AG04449 (cell line): ENCODE measurements at regions of chr11 and their contacts with region 1.

Region 1: DNA sequence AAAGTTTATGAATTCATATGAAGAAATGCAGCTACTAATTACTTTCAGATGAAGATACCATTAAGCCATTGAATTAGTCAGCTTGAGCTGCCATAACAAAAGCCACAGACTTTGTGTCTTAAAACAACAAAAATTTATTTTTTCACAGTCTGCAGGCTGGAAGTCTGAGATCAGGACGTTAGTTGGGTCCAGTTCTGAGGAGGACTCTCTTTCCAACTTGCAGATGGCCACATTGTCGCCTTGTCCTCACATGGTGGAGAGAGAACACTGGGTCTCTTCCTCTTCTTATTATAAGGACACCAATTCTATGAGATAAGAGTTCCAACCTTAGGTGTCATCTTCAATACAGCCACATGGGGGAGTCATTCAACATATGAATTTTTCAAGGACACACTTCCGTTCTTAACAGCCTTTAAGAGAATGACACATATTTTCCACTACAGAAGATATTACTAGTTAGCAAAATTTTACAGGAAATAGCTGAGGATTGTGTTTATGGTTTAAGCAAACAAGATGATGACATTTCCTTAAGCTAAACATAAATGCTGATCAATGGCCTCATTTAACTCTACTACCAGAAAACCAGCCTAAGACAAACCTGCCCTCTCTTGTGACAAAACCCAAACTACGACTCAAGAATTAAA is 56.0 kb downstream of the DCUN1D5 start:
- DNase-seq: peak; percentile 67
- H3K4me3 ChIP-seq: no peak overlapping the region
- CTCF ChIP-seq: peak; percentile 49

Region 2: DNA sequence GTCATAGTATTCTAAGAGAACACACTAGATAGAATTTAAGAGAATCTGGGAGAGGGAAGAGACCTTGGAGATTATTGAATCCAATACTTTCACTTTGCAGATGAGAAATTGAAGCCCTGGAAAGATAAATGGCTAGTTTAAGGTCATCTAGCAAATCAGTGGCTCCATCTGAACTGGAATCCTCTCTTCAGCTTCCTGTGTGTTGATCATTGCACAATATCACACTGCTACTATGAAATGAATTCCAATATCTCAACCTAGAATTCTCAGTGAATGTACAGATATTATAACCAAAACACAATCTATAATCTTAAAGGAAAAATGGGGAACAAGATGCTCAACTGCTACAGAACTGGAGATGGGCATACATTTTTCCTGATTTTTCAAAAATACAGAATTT is 11.9 kb after region 1 on chr11:
- CTCF ChIA-PET with region 1: interaction called, 15 read pairs
- POLR2A ChIA-PET with region 1: no interaction called
- DNase-seq: no peak
- H3K4me3 ChIP-seq: no peak overlapping the region
- CTCF ChIP-seq: no peak

Region 3: GRCh38 chr11:103055221-103055890 is 19.4 kb after region 1 on chr11:
- CTCF ChIA-PET with region 1: interaction called, 12 read pairs
- POLR2A ChIA-PET with region 1: no interaction called
- DNase-seq: no peak
- H3K4me3 ChIP-seq: no peak overlapping the region
- CTCF ChIP-seq: peak; percentile 43